ENCODE measurements at regions of chr12 and their contacts with region 1.

Region 1: GRCh38 chr12:121334513-121335343 is 17.5 kb downstream of the ANAPC5 start:
- DNase-seq: peak; percentile 65
- H3K4me3 ChIP-seq: no peak overlapping the region
- H3K27ac ChIP-seq: no peak overlapping the region
- H3K4me1 ChIP-seq: no peaks in the 10 kb centered on the region
- H3K27me3 ChIP-seq: no peaks in the 10 kb centered on the region
- CTCF ChIP-seq: peak; percentile 66 to 72
- POLR2A ChIP-seq: no peak

Region 2: GRCh38 chr12:121351820-121352681 is 17.3 kb after region 1 on chr12 and contains the start of gene ANAPC5:
- CTCF ChIA-PET with region 1: interaction called, 12 read pairs
- POLR2A ChIA-PET with region 1: no interaction called
- dilution Hi-C with region 1: no loop called
- intact Hi-C with region 1: no loop called
- DNase-seq: peak; percentile 99
- H3K4me3 ChIP-seq: peak within 1 kb of the TSS; percentile 54 to 85 (median 56)
- H3K27ac ChIP-seq: peak within 1 kb of the TSS; percentile 40
- H3K4me1 ChIP-seq: peaks cover 10% of the 10 kb centered on the region
- H3K27me3 ChIP-seq: no peaks in the 10 kb centered on the region
- CTCF ChIP-seq: peak in 1 of 2 donors; percentile 10
- POLR2A ChIP-seq: peak; percentile 94
- total RNA-seq, gene ANAPC5: 129 and 133 TPM in 2 replicates

Region 3: DNA sequence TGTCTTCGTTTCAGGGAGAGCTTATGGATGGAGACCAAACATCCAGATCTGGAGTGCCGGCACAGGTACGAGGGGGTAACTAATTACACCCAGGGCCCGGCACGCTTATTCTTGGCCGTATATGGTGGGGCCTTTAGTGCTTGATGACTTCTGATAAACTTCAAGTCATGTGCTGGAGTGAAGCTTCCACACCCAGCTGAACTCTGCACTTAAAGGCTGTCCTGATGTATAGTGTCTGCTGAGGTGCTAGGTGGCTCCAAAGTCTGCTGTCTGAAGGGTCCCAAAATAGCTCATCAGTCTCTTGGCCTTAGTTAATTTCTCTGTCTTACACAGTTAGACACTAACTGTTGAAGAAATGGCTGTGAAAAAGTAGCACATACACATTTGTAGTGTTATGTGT is 83.1 kb after region 1 on chr12:
- CTCF ChIA-PET with region 1: interaction called, 11 read pairs
- POLR2A ChIA-PET with region 1: no interaction called
- dilution Hi-C with region 1: no loop called
- intact Hi-C with region 1: no loop called
- DNase-seq: no peak
- H3K4me3 ChIP-seq: no peak overlapping the region
- H3K27ac ChIP-seq: no peak overlapping the region
- H3K4me1 ChIP-seq: no peaks in the 10 kb centered on the region
- H3K27me3 ChIP-seq: no peaks in the 10 kb centered on the region
- CTCF ChIP-seq: no peak
- POLR2A ChIP-seq: no peak

Measured in endothelial cell of umbilical vein (primary cell).